ENCODE measurements at regions of chr6 and their contacts with region 1.

Region 1: DNA sequence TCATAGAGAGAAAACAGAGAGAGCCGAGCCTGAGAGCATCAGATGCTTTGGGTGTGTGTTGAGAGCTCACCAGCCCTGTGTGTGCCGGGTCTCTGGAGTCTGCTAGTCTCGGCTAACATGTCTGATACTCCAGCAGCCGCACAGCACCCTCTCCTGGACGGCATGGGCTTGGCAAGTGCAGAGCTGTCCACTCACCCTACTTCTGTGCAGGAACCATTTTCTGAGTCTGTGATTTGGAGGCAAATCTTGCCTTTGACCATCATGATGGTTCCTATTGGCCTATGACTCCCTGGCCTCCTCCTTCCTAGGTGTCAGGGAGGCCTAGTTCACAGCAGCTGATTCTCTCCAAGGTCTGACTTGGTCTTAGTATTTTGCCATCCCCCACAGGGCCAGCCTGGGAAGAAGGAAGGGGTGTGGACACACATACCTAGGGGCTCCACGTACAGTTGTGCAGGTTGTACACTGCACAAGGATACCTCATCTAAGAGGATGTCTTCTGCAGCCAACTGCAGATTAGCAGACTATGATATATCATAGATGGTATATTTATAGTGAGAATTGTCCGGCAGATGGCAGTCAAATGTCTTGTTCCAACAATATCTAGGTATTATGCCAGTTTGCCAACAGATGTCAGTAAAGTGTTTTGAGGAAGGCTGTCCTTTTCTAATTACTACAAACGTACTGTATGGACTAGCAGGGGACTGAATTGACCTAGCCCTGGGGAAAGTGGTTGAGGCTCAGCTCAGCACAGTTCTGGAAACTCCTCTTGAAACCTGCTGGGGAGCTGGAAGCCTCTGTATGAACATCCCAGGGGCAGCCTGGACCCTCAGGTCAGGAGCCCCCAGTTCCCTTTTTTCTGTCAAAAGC is 13.0 kb downstream of the FGD2 start:
- DNase-seq: peak; percentile 95
- H3K4me3 Mint-ChIP-seq: peak overlapping the region; percentile 16
- H3K27ac Mint-ChIP-seq: peak overlapping the region; percentile 81
- H3K4me1 Mint-ChIP-seq: peaks cover 56% of the 10 kb centered on the region
- H3K27me3 Mint-ChIP-seq: no peaks in the 10 kb centered on the region

Region 2: DNA sequence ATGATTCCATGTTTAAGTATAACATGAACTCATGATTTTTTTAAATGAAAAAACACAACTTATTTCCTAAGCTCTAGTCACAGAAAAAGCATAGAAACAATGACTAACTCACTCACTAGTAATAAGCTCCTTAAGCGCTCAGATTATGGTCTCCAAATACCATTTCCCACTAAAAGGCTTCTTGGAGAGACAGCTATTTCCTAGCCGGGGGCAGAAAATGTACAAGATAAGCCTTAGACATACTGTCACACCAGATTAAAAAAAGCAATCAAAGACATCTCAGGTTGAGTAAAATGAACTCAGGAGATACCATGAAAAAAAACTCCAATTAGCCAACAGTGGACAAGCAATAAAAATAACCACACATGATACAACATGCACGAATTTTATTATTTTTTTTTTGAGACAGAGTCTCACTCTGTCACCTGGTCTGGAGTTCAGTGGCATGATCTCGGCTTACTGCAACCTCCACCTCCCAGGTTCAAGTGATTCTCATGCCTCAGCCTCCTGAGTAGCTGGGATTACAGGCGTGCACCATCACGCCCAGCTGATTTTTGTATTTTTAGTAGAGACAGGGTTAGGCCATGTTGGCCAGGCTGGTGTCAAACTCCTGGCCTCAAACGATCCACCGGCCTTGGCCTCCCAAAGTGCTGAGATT is 1112.5 kb before region 1 on chr6:
- CTCF ChIA-PET with region 1: no interaction called
- POLR2A ChIA-PET with region 1: no interaction called
- DNase-seq: no peak
- H3K4me3 Mint-ChIP-seq: no peak overlapping the region
- H3K27ac Mint-ChIP-seq: no peak overlapping the region
- H3K4me1 Mint-ChIP-seq: peaks cover 14% of the 10 kb centered on the region
- H3K27me3 Mint-ChIP-seq: no peaks in the 10 kb centered on the region

Region 3: DNA sequence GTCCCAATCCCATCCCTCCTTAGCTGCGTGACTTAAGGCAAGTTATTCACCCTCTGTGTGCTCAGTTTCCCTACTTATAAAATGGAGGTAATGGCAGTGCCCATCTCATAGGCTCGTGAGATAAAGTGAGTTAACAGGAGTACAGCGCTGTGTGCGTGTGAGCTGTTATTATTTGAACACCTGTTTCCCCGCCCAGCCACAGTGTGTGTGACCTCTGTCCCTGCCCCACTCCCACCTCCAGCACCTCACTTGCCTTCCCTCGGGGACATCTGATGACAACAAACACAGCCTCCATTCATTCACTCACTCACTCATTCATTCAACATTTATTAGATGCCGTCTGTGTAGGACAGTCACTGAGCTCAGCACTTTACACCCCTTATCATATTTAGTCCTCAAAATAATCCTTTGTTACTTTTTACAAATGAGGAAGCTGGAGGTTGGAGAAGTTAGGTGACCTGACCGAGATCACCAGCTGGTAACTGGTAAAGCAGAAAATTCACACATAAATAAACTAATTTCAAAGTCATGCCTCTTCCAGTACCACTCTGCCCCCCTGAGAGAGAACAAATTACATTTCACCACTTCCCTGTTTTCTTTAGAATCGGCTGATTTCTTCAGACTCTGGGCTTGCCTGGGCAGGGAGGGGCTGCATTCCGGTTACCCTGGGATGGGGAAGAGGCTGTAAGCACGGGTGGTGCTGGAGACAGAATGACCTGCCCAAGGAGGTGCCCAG is 237.8 kb before region 1 on chr6:
- CTCF ChIA-PET with region 1: interaction called, 17 read pairs
- POLR2A ChIA-PET with region 1: interaction called, 3 read pairs
- DNase-seq: no peak
- H3K4me3 Mint-ChIP-seq: no peak overlapping the region
- H3K27ac Mint-ChIP-seq: no peak overlapping the region
- H3K4me1 Mint-ChIP-seq: peaks cover 10% of the 10 kb centered on the region
- H3K27me3 Mint-ChIP-seq: peaks cover 20% of the 10 kb centered on the region

Region 4: DNA sequence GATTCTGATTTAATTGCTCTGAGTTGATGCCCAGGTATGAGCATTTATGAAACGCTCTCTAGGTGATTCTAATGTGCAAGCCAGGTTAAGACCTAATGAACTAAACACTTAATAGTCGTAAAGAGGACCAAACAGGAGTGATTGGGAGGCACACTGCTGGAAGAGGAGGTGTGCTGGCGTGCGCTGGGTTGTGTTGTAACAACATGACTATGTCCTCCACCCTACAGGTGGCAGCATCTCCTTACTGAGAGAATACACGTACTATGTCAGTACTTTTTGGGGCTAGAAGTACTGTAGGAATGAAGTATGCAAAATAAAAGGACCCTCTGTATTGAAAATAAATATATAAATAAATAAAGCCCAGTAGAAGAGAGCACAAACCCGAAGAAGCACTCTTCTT is 120.8 kb before region 1 on chr6:
- CTCF ChIA-PET with region 1: interaction called, 19 read pairs
- POLR2A ChIA-PET with region 1: interaction called, 3 read pairs
- DNase-seq: peak; percentile 31
- H3K4me3 Mint-ChIP-seq: no peak overlapping the region
- H3K27ac Mint-ChIP-seq: no peak overlapping the region
- H3K4me1 Mint-ChIP-seq: peaks cover 15% of the 10 kb centered on the region
- H3K27me3 Mint-ChIP-seq: no peaks in the 10 kb centered on the region

Region 5: DNA sequence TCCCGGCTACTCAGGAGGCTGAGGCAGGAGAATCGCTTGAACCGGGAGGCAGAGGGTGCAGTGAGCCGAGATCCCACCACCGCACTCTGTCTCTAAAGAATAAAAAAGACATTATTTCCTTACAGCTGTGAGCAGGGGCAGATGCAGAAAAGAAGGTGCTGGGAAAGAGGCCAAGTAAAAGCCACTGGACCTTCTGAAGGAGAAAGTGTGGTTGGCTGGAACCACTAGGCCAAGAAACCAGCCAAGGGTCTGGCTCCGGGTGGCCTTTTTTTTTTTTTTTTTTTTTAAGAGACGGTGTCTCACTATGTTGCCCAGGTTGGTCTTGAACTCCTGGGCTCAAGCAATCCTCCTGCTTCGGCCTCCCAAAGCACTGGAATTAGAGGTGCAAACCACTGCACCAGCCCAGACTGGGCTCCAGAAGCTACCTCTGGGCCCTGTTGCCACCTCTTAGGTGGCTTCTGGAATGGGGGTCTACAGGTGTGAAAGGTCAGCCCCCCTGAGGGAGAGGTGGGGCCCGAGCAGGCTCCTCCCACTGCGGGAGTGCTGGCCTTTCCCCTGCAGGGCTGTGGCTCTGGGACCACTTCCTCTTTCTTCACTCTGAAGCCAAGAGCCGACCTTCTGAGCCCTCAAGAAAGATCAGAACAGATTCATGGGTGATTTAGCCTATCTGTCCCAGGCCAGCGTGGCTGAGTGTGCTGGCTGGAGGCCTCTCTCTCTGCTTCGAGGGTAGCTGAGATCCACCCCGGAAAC is 13.2 kb before region 1 on chr6 and contains the start of gene FGD2:
- CTCF ChIA-PET with region 1: interaction called, 28 read pairs
- POLR2A ChIA-PET with region 1: interaction called, 9 read pairs
- DNase-seq: no peak
- H3K4me3 Mint-ChIP-seq: peak within 1 kb of the TSS; percentile 62
- H3K27ac Mint-ChIP-seq: peak within 1 kb of the TSS; percentile 31
- H3K4me1 Mint-ChIP-seq: peaks cover 29% of the 10 kb centered on the region
- H3K27me3 Mint-ChIP-seq: no peaks in the 10 kb centered on the region
- total RNA-seq, gene FGD2: 4.7 to 4.9 TPM

Region 6: GRCh38 chr6:37169496-37170272 is 151.3 kb after region 1 on chr6 and contains the start of gene PIM1:
- CTCF ChIA-PET with region 1: interaction called, 275 read pairs
- POLR2A ChIA-PET with region 1: interaction called, 557 read pairs
- DNase-seq: peak; percentile 100
- H3K4me3 Mint-ChIP-seq: peak within 1 kb of the TSS; percentile 94
- H3K27ac Mint-ChIP-seq: peak within 1 kb of the TSS; percentile 98
- H3K4me1 Mint-ChIP-seq: peaks cover 36% of the 10 kb centered on the region
- H3K27me3 Mint-ChIP-seq: peaks cover 1% of the 10 kb centered on the region
- total RNA-seq, gene PIM1: 497 to 505 TPM

Region 7: DNA sequence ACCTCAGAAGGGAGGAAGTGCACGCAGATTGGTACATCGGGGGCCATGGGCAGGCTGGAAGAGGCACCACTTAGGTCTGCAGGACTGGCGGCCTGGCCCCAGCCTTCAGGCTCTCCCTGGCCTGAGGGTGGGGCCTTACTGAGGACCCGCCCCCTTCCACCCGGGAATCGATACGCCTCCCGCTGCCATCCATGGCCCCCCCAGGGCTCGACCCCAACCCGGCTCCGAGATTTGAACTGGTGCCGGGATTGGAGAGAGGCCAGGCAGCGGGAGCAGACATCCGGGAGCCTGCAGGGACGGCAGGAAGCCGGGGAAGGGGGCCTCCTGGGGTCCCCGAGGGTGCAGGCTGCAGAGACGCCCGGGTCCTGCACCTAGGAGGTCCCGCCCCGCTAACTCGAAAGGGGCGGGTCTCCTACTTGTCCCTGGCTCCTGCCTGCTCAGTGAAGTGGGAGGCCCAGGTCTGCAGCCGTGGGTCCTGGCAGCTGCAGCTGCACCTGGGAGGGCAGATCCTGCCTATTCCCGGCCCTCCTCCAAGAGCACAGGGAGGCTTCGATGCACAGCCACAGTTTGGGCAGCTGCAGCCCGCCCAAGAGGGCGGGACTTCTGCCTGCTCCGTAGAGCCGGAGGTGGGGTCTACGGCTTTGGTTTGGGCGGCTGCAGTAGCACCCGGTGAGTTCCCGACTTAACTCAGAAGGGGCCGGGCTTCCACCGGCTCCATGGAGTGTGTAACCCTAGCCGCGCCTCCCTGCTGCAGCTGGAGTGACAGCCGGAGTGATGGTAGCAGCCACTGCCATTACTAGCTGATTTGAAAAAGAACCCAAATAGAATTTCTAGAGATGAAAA is 203.9 kb after region 1 on chr6:
- CTCF ChIA-PET with region 1: interaction called, 16 read pairs
- POLR2A ChIA-PET with region 1: interaction called, 4 read pairs
- DNase-seq: peak; percentile 79
- H3K4me3 Mint-ChIP-seq: peak overlapping the region; percentile 77
- H3K27ac Mint-ChIP-seq: no peak overlapping the region
- H3K4me1 Mint-ChIP-seq: peaks cover 26% of the 10 kb centered on the region
- H3K27me3 Mint-ChIP-seq: no peaks in the 10 kb centered on the region

Measured in activated CD4-positive, alpha-beta memory T cell treated with anti-CD3 and anti-CD28 coated beads, Interleukin-2, amount 10 ng/mL, durations not matched to agents 7 days and 5 days (primary cell).